ENCODE measurements at regions of chr1 and their contacts with region 1.

Region 1: GRCh38 chr1:76154206-76154956 is 79.8 kb downstream of the ST6GALNAC3 start:
- DNase-seq: peak; percentile 75
- H3K4me3 Mint-ChIP-seq: peak overlapping the region; percentile 87
- H3K27ac Mint-ChIP-seq: peak overlapping the region; percentile 82
- H3K4me1 Mint-ChIP-seq: peaks cover 14% of the 10 kb centered on the region
- H3K27me3 Mint-ChIP-seq: peaks cover 2% of the 10 kb centered on the region

Region 2: GRCh38 chr1:74180490-74180889 is 1973.9 kb before region 1 on chr1:
- intact Hi-C with region 1: no loop called
- DNase-seq: no peak
- H3K4me3 Mint-ChIP-seq: no peak overlapping the region
- H3K27ac Mint-ChIP-seq: no peak overlapping the region
- H3K4me1 Mint-ChIP-seq: no peaks in the 10 kb centered on the region
- H3K27me3 Mint-ChIP-seq: no peaks in the 10 kb centered on the region

Region 3: DNA sequence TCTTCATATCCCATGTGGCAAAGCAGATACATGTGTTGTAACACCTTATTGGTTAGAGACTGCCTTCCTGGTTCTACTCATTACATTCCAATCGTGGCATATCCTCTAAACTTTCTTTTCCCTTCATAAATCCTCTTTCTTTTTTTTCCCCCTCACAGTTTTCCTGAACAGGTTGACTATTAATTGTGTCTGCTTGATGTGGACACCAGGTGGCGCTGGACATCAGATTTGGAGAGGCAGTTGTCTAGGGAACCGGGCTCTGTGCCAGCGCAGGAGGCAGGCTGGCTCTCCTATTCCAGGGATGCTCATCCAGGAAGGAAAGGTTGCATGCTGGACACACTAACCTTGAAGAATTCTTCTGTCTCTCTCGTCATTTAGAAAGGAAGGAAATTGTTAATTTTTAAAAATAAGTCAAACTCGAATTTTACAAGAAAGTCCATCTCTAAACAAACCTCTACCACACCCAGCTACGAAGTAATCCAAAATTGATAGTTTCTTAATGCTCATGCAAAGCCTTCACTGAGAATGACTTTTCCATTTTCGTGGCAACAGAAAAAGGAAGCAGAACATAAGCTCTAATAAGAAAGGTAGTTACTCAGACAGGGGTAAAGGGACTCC is 162.8 kb before region 1 on chr1:
- intact Hi-C with region 1: loop called (anchors 1 kb)
- DNase-seq: peak; percentile 25
- H3K4me3 Mint-ChIP-seq: no peak overlapping the region
- H3K27ac Mint-ChIP-seq: no peak overlapping the region
- H3K4me1 Mint-ChIP-seq: no peaks in the 10 kb centered on the region
- H3K27me3 Mint-ChIP-seq: peaks cover 9% of the 10 kb centered on the region

Region 4: GRCh38 chr1:76238094-76238628 is 83.8 kb after region 1 on chr1:
- intact Hi-C with region 1: no loop called
- DNase-seq: no peak
- H3K4me3 Mint-ChIP-seq: no peak overlapping the region
- H3K27ac Mint-ChIP-seq: no peak overlapping the region
- H3K4me1 Mint-ChIP-seq: no peaks in the 10 kb centered on the region
- H3K27me3 Mint-ChIP-seq: no peaks in the 10 kb centered on the region

Region 5: GRCh38 chr1:76294482-76295194 is 140.3 kb after region 1 on chr1:
- intact Hi-C with region 1: loop called (anchors 2 kb)
- DNase-seq: no peak
- H3K4me3 Mint-ChIP-seq: peak overlapping the region; percentile 56
- H3K27ac Mint-ChIP-seq: peak overlapping the region; percentile 83
- H3K4me1 Mint-ChIP-seq: peaks cover 60% of the 10 kb centered on the region
- H3K27me3 Mint-ChIP-seq: no peaks in the 10 kb centered on the region

Region 6: GRCh38 chr1:76494807-76495206 is 340.4 kb after region 1 on chr1:
- intact Hi-C with region 1: loop called (anchors 10 kb)
- DNase-seq: peak; percentile 1
- H3K4me3 Mint-ChIP-seq: peak overlapping the region; percentile 20
- H3K27ac Mint-ChIP-seq: peak overlapping the region; percentile 60
- H3K4me1 Mint-ChIP-seq: peaks cover 35% of the 10 kb centered on the region
- H3K27me3 Mint-ChIP-seq: peaks cover 1% of the 10 kb centered on the region

Region 7: GRCh38 chr1:76868154-76868882 is 713.9 kb after region 1 on chr1:
- intact Hi-C with region 1: loop called (anchors 10 kb)
- DNase-seq: no peak
- H3K4me3 Mint-ChIP-seq: peak overlapping the region; percentile 47
- H3K27ac Mint-ChIP-seq: no peak overlapping the region
- H3K4me1 Mint-ChIP-seq: peaks cover 4% of the 10 kb centered on the region
- H3K27me3 Mint-ChIP-seq: peaks cover 56% of the 10 kb centered on the region

Region 8: GRCh38 chr1:77219166-77219887 is 1064.9 kb after region 1 on chr1 and contains the start of gene PIGK:
- intact Hi-C with region 1: loop called (anchors 2 kb)
- DNase-seq: peak; percentile 85
- H3K4me3 Mint-ChIP-seq: peak within 1 kb of the TSS; percentile 92
- H3K27ac Mint-ChIP-seq: peak within 1 kb of the TSS; percentile 84
- H3K4me1 Mint-ChIP-seq: peaks cover 26% of the 10 kb centered on the region
- H3K27me3 Mint-ChIP-seq: no peaks in the 10 kb centered on the region
- total RNA-seq, gene PIGK: 15.9 and 19.4 TPM in 2 replicates